CD8-positive, alpha-beta T cell (primary cell): ENCODE measurements at regions of chr4 and their contacts with region 1.

Region 1: DNA sequence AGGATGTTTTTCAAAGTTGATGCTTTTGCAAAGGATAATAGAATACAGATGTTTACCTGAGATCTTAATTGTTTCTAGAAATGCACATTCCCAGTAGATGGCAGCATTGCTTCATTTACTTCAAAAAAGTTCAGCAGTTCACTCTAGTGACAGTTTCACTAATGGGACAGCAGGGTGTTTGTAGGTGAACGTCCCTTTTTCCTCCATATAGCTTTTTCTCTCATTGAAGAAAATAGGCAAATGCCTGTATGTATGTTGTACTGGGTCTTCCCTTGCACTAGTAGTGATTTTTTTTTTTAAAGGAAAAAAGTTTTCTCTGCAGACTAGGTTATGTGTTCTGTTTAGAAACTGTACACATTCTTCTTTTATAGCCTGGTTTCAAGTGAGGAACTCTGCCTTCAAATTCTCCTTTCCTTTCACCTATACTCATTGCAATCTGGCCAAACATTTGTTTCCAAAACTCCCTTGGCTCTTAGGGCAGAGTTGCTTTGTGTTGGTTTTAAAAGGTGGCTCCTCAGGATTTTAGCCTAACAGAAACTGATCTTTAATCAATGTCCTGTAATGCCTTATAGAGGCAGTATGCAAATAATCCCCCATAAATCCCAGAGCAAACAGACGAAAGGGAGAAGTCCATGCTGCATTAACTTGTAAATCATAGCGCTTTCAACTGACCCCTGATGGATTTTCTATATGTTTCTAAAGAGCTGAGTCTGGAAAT is 86.3 kb downstream of the EGF start:
- DNase-seq: peak in 3 of 9 experiments; percentile 39 to 81 (median 77)
- ATAC-seq: peak; percentile 63
- H3K4me3 ChIP-seq: no peak overlapping the region
- H3K4me3 Mint-ChIP-seq: no peak overlapping the region
- H3K27ac ChIP-seq: no peak overlapping the region
- H3K27ac Mint-ChIP-seq: no peak overlapping the region
- H3K4me1 ChIP-seq: no peaks in the 10 kb centered on the region
- H3K4me1 Mint-ChIP-seq: no peaks in the 10 kb centered on the region
- H3K27me3 ChIP-seq: no peaks in the 10 kb centered on the region
- H3K27me3 Mint-ChIP-seq: peaks cover 8% of the 10 kb centered on the region
- CTCF ChIP-seq: peak; percentile 91

Region 2: GRCh38 chr4:110020646-110021443 is 21.8 kb after region 1 on chr4:
- CTCF ChIA-PET with region 1: interaction called, 10 read pairs
- POLR2A ChIA-PET with region 1: no interaction called
- intact Hi-C with region 1: no loop called
- DNase-seq: no peak
- ATAC-seq: no peak
- H3K4me3 ChIP-seq: no peak overlapping the region
- H3K4me3 Mint-ChIP-seq: no peak overlapping the region
- H3K27ac ChIP-seq: no peak overlapping the region
- H3K27ac Mint-ChIP-seq: no peak overlapping the region
- H3K4me1 ChIP-seq: no peaks in the 10 kb centered on the region
- H3K4me1 Mint-ChIP-seq: no peaks in the 10 kb centered on the region
- H3K27me3 ChIP-seq: no peaks in the 10 kb centered on the region
- H3K27me3 Mint-ChIP-seq: no peaks in the 10 kb centered on the region
- CTCF ChIP-seq: no peak

Region 3: GRCh38 chr4:110510955-110511544 is 512.0 kb after region 1 on chr4:
- CTCF ChIA-PET with region 1: interaction called, 224 read pairs
- POLR2A ChIA-PET with region 1: no interaction called
- intact Hi-C with region 1: loop called (anchors 1 kb)
- DNase-seq: peak in 2 of 9 experiments; percentile 58 to 70
- ATAC-seq: peak; percentile 51
- H3K4me3 ChIP-seq: no peak overlapping the region
- H3K4me3 Mint-ChIP-seq: no peak overlapping the region
- H3K27ac ChIP-seq: no peak overlapping the region
- H3K27ac Mint-ChIP-seq: no peak overlapping the region
- H3K4me1 ChIP-seq: peaks cover 10% of the 10 kb centered on the region
- H3K4me1 Mint-ChIP-seq: peaks cover 10% of the 10 kb centered on the region
- H3K27me3 ChIP-seq: no peaks in the 10 kb centered on the region
- H3K27me3 Mint-ChIP-seq: peaks cover 2% of the 10 kb centered on the region
- CTCF ChIP-seq: peak; percentile 86

Region 4: GRCh38 chr4:110516106-110516922 is 517.3 kb after region 1 on chr4:
- CTCF ChIA-PET with region 1: interaction called, 224 read pairs
- POLR2A ChIA-PET with region 1: no interaction called
- intact Hi-C with region 1: loop called (anchors 1 kb)
- DNase-seq: peak; percentile 44 to 87 (median 76)
- ATAC-seq: peak; percentile 92
- H3K4me3 ChIP-seq: peak overlapping the region; percentile 66 to 75
- H3K4me3 Mint-ChIP-seq: peak overlapping the region; percentile 92
- H3K27ac ChIP-seq: peak overlapping the region; percentile 13 to 73
- H3K27ac Mint-ChIP-seq: peak overlapping the region; percentile 62
- H3K4me1 ChIP-seq: peaks cover 10% of the 10 kb centered on the region
- H3K4me1 Mint-ChIP-seq: peaks cover 14% of the 10 kb centered on the region
- H3K27me3 ChIP-seq: no peaks in the 10 kb centered on the region
- H3K27me3 Mint-ChIP-seq: peaks cover 14% of the 10 kb centered on the region
- CTCF ChIP-seq: peak; percentile 90